Endothelial cell of umbilical vein (primary cell): ENCODE measurements at regions of chr11 and their contacts with region 1.

Region 1: DNA sequence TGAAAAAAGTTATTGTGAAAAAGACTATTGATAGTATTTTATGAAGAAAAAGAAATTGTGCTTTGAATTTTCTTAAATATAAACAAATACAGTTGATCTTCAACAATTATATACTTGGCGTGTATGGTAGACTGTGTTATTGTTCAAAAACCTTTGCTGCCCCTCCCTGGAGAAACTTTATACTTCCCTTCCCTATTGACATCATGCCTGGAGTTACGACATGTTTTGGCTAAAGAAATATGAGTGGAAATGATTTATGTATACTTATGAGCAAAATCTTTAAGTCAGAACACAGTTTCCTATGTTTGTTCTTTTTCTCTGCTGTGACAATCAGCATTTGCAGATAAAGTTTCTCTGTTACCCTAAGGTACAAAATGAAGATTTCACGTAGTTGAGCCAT is 243.8 kb downstream of the TMEM135 start:
- DNase-seq: peak; percentile 96
- H3K4me3 ChIP-seq: no peak overlapping the region
- H3K27ac ChIP-seq: no peak overlapping the region
- H3K4me1 ChIP-seq: peaks cover 9% of the 10 kb centered on the region
- H3K27me3 ChIP-seq: no peaks in the 10 kb centered on the region
- CTCF ChIP-seq: peak in 1 of 2 donors; percentile 22
- POLR2A ChIP-seq: no peak

Region 2: DNA sequence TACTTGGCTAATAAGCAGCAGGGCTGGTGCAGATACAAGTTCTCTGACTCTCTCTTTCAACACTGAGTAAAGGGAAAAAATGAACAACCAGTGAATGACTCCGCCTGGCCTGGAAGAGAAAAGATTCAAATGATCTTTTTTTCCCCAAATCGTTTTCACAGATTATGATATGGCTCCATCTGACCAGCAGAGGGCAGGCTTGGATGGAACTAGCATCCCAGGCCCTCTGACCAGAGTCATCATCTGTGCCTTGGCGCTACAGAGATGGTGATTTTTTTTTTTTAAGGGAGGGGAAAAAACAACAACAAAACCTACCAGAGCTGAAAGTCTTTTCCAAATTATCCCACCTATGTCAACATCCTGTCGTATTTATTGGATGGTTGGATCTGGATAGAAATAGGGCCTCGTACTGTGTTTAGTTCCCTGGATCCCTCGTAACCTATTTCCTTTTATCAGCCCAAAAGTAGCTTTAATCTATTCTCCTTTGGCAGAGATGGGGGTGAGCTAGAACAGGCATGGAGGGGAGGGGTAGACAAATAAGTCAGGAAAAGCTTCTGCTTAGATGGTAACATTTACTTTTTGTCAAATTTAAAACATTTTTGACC is 411.4 kb before region 1 on chr11:
- CTCF ChIA-PET with region 1: interaction called, 4 read pairs
- POLR2A ChIA-PET with region 1: no interaction called
- dilution Hi-C with region 1: no loop called
- intact Hi-C with region 1: loop called (anchors 2 kb)
- DNase-seq: peak; percentile 67
- H3K4me3 ChIP-seq: no peak overlapping the region
- H3K27ac ChIP-seq: peak overlapping the region; percentile 16
- H3K4me1 ChIP-seq: no peaks in the 10 kb centered on the region
- H3K27me3 ChIP-seq: no peaks in the 10 kb centered on the region
- CTCF ChIP-seq: peak; percentile 69 to 70
- POLR2A ChIP-seq: no peak

Region 3: DNA sequence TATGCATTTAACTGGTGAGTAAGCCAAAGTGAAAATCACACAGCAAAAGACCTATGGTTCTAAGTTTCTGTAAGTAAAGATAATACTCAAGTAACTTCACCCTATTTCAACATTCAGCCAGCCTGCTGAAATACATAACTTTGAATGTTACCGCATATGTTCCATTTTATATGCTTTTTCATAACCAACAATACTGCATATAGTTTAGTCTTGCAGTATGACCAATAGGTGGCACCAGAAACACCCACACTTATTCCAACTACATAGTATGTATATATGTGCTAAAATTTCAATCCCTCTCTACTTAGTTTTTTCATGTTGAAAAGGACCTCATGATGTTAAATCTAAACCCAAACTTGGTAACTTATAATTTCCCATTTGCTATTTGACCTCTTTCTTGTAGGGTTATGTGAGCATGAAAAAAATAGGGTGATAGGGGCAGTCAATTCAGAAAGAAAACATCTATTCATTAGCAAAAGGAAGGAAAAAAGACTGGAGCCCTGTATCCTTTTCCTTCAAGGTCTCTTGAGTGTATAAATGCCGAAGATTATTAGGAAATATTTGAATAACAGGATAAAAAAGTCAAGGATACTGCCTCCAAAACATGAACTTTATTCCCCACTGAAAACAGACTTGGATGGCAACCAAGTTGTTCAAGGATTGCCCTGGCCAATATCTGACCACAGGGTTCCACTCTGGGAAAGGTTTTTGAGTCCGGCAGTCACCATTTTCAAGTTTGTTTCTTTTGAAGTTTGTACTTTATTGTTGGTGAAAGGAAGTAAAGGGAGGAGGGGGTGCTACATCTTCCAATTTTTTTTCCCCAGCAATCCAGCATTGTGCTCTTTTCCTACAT is 302.5 kb before region 1 on chr11:
- CTCF ChIA-PET with region 1: interaction called, 7 read pairs
- POLR2A ChIA-PET with region 1: no interaction called
- dilution Hi-C with region 1: no loop called
- intact Hi-C with region 1: loop called (anchors 2 kb)
- DNase-seq: peak; percentile 82
- H3K4me3 ChIP-seq: no peak overlapping the region
- H3K27ac ChIP-seq: no peak overlapping the region
- H3K4me1 ChIP-seq: peaks cover 5% of the 10 kb centered on the region
- H3K27me3 ChIP-seq: no peaks in the 10 kb centered on the region
- CTCF ChIP-seq: peak; percentile 35 to 52
- POLR2A ChIP-seq: no peak

Region 4: GRCh38 chr11:87097582-87097981 is 183.9 kb before region 1 on chr11:
- CTCF ChIA-PET with region 1: interaction called, 5 read pairs
- POLR2A ChIA-PET with region 1: no interaction called
- dilution Hi-C with region 1: no loop called
- intact Hi-C with region 1: loop called (anchors 1 kb)
- DNase-seq: peak; percentile 52
- H3K4me3 ChIP-seq: no peak overlapping the region
- H3K27ac ChIP-seq: no peak overlapping the region
- H3K4me1 ChIP-seq: no peaks in the 10 kb centered on the region
- H3K27me3 ChIP-seq: no peaks in the 10 kb centered on the region
- CTCF ChIP-seq: peak; percentile 33 to 65
- POLR2A ChIP-seq: no peak

Region 5: GRCh38 chr11:87136236-87136635 is 145.3 kb before region 1 on chr11:
- CTCF ChIA-PET with region 1: no interaction called
- POLR2A ChIA-PET with region 1: no interaction called
- dilution Hi-C with region 1: no loop called
- intact Hi-C with region 1: no loop called
- DNase-seq: no peak
- H3K4me3 ChIP-seq: no peak overlapping the region
- H3K27ac ChIP-seq: no peak overlapping the region
- H3K4me1 ChIP-seq: no peaks in the 10 kb centered on the region
- H3K27me3 ChIP-seq: no peaks in the 10 kb centered on the region
- CTCF ChIP-seq: no peak
- POLR2A ChIP-seq: no peak

Region 6: GRCh38 chr11:87324817-87325489 is 43.5 kb after region 1 on chr11:
- CTCF ChIA-PET with region 1: no interaction called
- POLR2A ChIA-PET with region 1: no interaction called
- dilution Hi-C with region 1: no loop called
- intact Hi-C with region 1: no loop called
- DNase-seq: no peak
- H3K4me3 ChIP-seq: no peak overlapping the region
- H3K27ac ChIP-seq: no peak overlapping the region
- H3K4me1 ChIP-seq: no peaks in the 10 kb centered on the region
- H3K27me3 ChIP-seq: no peaks in the 10 kb centered on the region
- CTCF ChIP-seq: no peak
- POLR2A ChIP-seq: no peak

Region 7: DNA sequence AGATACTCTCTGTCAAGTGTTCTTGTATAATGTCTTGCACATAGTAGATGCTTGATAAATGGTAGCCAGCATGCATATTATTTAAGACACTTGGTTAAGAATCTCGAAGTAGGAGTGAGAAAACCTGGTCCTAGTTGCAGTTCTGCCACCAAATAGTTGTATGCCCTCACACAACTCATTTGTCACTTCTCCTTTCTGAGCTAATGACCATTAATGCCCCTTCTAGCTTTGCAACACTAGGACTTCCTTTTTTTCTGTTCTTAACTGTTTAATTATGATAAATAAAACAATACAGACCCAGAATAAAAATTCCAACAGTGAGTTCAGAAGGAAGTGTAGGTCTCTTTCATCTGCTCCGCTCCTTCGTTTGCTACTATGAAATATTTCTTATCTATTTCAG is 209.9 kb after region 1 on chr11:
- CTCF ChIA-PET with region 1: no interaction called
- POLR2A ChIA-PET with region 1: no interaction called
- dilution Hi-C with region 1: no loop called
- intact Hi-C with region 1: no loop called
- DNase-seq: no peak
- H3K4me3 ChIP-seq: no peak overlapping the region
- H3K27ac ChIP-seq: no peak overlapping the region
- H3K4me1 ChIP-seq: no peaks in the 10 kb centered on the region
- H3K27me3 ChIP-seq: no peaks in the 10 kb centered on the region
- CTCF ChIP-seq: no peak
- POLR2A ChIP-seq: no peak